ENCODE measurements at regions of chr20 and their contacts with region 1.

Region 1: DNA sequence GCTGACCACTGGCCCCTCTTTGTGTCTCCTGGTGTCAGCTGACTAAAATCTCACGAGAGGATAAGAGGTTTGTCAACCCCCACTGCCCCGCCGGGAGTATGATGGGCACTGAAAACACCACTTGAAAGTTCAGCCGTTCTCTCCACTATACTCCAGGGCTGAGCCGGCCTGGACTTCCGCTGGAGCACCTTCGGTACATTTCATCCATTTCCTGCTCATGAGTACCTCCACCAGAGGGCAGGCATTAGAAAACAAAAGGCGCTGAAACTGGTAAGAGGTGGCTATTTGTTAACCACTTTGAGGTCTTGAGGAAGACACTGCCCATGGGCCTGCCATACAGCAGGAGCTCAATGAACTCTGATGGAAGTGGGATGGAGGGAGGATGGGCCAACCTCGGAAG is 17.9 kb upstream of the ANKRD60 start:
- DNase-seq: no peak
- H3K4me3 ChIP-seq: no peak overlapping the region
- CTCF ChIP-seq: peak; percentile 44

Region 2: GRCh38 chr20:58141971-58142781 is 104.2 kb before region 1 on chr20:
- in situ Hi-C with region 1: no loop called
- DNase-seq: no peak
- H3K4me3 ChIP-seq: no peak overlapping the region
- CTCF ChIP-seq: no peak

Region 3: GRCh38 chr20:58511364-58511763 is 265.0 kb after region 1 on chr20:
- in situ Hi-C with region 1: no loop called
- DNase-seq: peak; percentile 11
- H3K4me3 ChIP-seq: no peak overlapping the region
- CTCF ChIP-seq: no peak

Region 4: DNA sequence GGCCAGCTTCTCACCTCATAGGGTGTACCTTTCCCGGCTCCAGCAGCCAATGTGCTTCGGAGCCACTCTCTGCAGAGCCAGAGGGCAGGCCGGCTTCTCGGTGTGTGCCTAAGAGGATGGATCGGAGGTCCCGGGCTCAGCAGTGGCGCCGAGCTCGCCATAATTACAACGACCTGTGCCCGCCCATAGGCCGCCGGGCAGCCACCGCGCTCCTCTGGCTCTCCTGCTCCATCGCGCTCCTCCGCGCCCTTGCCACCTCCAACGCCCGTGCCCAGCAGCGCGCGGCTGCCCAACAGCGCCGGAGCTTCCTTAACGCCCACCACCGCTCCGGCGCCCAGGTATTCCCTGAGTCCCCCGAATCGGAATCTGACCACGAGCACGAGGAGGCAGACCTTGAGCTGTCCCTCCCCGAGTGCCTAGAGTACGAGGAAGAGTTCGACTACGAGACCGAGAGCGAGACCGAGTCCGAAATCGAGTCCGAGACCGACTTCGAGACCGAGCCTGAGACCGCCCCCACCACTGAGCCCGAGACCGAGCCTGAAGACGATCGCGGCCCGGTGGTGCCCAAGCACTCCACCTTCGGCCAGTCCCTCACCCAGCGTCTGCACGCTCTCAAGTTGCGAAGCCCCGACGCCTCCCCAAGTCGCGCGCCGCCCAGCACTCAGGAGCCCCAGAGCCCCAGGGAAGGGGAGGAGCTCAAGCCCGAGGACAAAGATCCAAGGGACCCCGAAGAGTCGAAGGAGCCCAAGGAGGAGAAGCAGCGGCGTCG is 593.8 kb after region 1 on chr20:
- in situ Hi-C with region 1: loop called (anchors 10 kb)
- DNase-seq: no peak
- H3K4me3 ChIP-seq: peak overlapping the region; percentile 12
- CTCF ChIP-seq: no peak